ENCODE measurements at regions of chr12 and their contacts with region 1.

Region 1: GRCh38 chr12:12916135-12916944 is 25.0 kb downstream of the GPRC5A start:
- DNase-seq: peak; percentile 81
- H3K4me3 ChIP-seq: no peak overlapping the region
- H3K27ac ChIP-seq: peak overlapping the region; percentile 18 to 34
- H3K4me1 ChIP-seq: peaks cover 9% of the 10 kb centered on the region
- H3K27me3 ChIP-seq: no peaks in the 10 kb centered on the region
- CTCF ChIP-seq: peak; percentile 95 to 97 (median 96)
- POLR2A ChIP-seq: no peak

Region 2: GRCh38 chr12:12983420-12984035 is 67.2 kb after region 1 on chr12:
- intact Hi-C with region 1: loop called (anchors 5 kb)
- DNase-seq: no peak
- H3K4me3 ChIP-seq: no peak overlapping the region
- H3K27ac ChIP-seq: no peak overlapping the region
- H3K4me1 ChIP-seq: no peaks in the 10 kb centered on the region
- H3K27me3 ChIP-seq: no peaks in the 10 kb centered on the region
- CTCF ChIP-seq: peak in 3 of 4 experiments; percentile 30 to 63 (median 56)
- POLR2A ChIP-seq: no peak

Region 3: DNA sequence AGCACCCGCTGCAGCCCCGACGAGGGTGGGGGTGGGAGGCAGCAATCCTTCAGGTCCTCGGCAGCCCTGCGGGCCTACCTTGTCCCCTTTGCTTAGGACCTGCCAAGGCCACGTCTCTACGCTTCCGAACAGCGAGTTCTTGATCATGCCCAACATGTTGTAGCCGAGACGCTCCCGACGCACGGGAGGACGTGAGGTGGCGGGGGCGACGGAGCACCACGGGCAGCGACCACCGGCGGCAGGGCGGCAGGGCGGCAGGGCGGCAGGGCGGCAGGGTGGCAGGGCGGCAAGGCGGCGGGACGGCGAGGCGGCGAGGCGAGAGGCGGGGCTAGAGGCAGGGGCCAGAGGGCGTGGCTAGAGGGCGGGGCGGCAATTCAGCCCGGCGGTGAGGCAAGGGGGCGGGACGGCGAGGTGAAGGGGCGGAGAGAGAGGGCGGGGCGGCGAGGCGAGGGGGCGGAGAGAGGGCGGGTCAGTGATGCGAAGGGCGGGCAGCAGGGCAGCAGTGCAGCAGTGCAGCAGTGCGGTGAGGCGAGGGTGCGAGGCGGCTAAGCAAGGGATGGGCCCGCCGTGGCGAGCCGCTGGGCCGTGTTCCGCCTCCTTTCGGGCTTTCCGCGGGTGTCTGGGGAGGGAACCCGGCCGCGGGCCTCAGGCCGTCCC is 83.7 kb after region 1 on chr12 and contains the start of gene HEBP1:
- intact Hi-C with region 1: loop called (anchors 5 kb)
- DNase-seq: peak; percentile 96
- H3K4me3 ChIP-seq: peak within 1 kb of the TSS; percentile 67 to 82
- H3K27ac ChIP-seq: peak within 1 kb of the TSS; percentile 95 to 96
- H3K4me1 ChIP-seq: peaks cover 3% of the 10 kb centered on the region
- H3K27me3 ChIP-seq: no peaks in the 10 kb centered on the region
- CTCF ChIP-seq: peak in 2 of 4 experiments; percentile 10 to 40
- POLR2A ChIP-seq: peak; percentile 98
- total RNA-seq, gene HEBP1: 30.0 to 40.3 TPM

Region 4: GRCh38 chr12:13094347-13094746 is 178.0 kb after region 1 on chr12:
- intact Hi-C with region 1: loop called (anchors 10 kb)
- DNase-seq: no peak
- H3K4me3 ChIP-seq: no peak overlapping the region
- H3K27ac ChIP-seq: no peak overlapping the region
- H3K4me1 ChIP-seq: peaks cover 5% of the 10 kb centered on the region
- H3K27me3 ChIP-seq: no peaks in the 10 kb centered on the region
- CTCF ChIP-seq: no peak
- POLR2A ChIP-seq: no peak

Region 5: GRCh38 chr12:13211859-13212664 is 295.7 kb after region 1 on chr12:
- intact Hi-C with region 1: loop called (anchors 1 kb)
- DNase-seq: peak; percentile 58
- H3K4me3 ChIP-seq: no peak overlapping the region
- H3K27ac ChIP-seq: no peak overlapping the region
- H3K4me1 ChIP-seq: no peaks in the 10 kb centered on the region
- H3K27me3 ChIP-seq: no peaks in the 10 kb centered on the region
- CTCF ChIP-seq: peak; percentile 43 to 80 (median 80)
- POLR2A ChIP-seq: no peak